ENCODE measurements at regions of chr2 and their contacts with region 1.

Region 1: GRCh38 chr2:66466433-66466832 is 31.5 kb downstream of the MEIS1 start:
- DNase-seq: no peak
- H3K4me3 ChIP-seq: no peak overlapping the region
- H3K27ac ChIP-seq: no peak overlapping the region
- H3K4me1 ChIP-seq: peaks cover 0 to 16% of the 10 kb centered on the region in 2 donors
- H3K27me3 ChIP-seq: no peaks in the 10 kb centered on the region
- CTCF ChIP-seq: no peak

Region 2: DNA sequence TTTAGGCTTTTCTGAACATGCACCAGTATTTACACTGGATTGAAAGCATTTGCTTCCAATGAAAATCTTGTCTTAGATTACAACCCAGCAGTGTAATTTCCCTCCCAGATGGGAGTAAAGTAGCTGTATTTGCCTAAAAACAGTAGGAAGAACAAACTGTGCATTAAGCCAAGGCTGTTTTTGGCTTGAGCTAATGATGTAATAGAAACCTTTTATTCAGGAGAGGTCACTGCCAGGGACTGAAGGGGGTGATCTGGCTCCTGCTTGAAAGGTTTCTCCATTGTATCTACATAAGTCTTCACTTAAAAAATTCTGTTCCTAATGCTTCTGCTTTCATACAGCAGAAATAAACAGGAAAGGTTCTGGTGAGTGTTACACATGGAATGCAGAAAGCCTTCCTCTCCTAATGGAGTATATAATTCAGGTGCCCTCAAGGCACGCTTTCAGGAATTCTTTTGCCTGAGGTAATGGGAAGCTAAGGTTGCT is 42.9 kb after region 1 on chr2:
- intact Hi-C with region 1: loop called (anchors 5 kb)
- DNase-seq: no peak
- H3K4me3 ChIP-seq: no peak overlapping the region
- H3K27ac ChIP-seq: no peak overlapping the region
- H3K4me1 ChIP-seq: peaks cover 0 to 21% of the 10 kb centered on the region in 2 donors
- H3K27me3 ChIP-seq: no peaks in the 10 kb centered on the region
- CTCF ChIP-seq: no peak